ENCODE measurements at regions of chr1 and their contacts with region 1.

Region 1: GRCh38 chr1:50462964-50463363 is 39.7 kb upstream of the DMRTA2 start:
- DNase-seq: no peak
- ATAC-seq: no peak
- H3K4me3 ChIP-seq: no peak overlapping the region
- H3K27ac ChIP-seq: no peak overlapping the region
- H3K4me1 ChIP-seq: no peaks in the 10 kb centered on the region
- H3K27me3 ChIP-seq: no peaks in the 10 kb centered on the region
- CTCF ChIP-seq: no peak
- EP300 ChIP-seq: no peak
- POLR2A ChIP-seq: no peak
- RAD21 ChIP-seq: no peak

Region 2: DNA sequence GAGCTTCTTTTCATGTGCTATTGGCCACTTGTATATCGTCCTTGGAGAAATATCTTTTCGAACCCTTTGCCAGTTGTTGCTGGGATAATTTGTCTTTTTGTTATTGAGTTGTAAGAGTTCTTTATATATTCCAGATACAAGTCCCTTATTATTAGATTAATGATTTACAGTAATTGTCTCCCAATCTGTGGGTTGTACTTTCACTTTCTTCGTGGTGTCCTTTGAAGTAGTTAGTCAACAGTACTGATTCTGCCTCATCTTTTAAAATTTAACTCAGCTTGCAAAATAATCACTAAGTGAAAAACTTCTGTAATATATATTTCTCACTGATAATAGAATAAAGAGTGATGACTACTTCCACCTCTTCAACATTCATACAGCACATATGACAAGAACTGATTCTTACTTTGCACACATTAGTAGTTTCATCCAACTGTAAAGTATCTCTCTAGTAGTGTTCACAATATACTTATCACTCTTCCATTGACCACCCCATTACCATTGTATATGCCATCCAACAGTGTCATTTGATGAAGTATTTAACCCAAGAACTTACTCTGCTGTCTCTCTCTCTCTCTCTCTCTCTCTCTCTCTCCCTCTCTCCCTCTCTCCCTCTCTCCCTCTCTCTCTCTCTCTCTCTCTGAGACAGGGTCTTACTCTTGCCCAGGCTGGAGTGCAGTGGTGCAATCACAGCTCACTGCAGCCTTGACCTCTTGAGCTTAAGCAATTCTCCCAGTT is 64.5 kb after region 1 on chr1:
- CTCF ChIA-PET with region 1: no interaction called
- POLR2A ChIA-PET with region 1: no interaction called
- in situ Hi-C with region 1: loop called (anchors 10 kb)
- intact Hi-C with region 1: no loop called
- DNase-seq: peak; percentile 83
- ATAC-seq: peak; percentile 94
- H3K4me3 ChIP-seq: peak overlapping the region; percentile 37 to 59 (median 39); a peak in 5 of 6 replicates
- H3K27ac ChIP-seq: peak overlapping the region; percentile 68
- H3K4me1 ChIP-seq: peaks cover 33% of the 10 kb centered on the region
- H3K27me3 ChIP-seq: no peaks in the 10 kb centered on the region
- CTCF ChIP-seq: no peak
- EP300 ChIP-seq: peak in 1 of 2 experiments; percentile 58; a peak in 2 of 4 replicates
- POLR2A ChIP-seq: no peak
- RAD21 ChIP-seq: no peak